ENCODE measurements at regions of chr7 and their contacts with region 1.

Region 1: DNA sequence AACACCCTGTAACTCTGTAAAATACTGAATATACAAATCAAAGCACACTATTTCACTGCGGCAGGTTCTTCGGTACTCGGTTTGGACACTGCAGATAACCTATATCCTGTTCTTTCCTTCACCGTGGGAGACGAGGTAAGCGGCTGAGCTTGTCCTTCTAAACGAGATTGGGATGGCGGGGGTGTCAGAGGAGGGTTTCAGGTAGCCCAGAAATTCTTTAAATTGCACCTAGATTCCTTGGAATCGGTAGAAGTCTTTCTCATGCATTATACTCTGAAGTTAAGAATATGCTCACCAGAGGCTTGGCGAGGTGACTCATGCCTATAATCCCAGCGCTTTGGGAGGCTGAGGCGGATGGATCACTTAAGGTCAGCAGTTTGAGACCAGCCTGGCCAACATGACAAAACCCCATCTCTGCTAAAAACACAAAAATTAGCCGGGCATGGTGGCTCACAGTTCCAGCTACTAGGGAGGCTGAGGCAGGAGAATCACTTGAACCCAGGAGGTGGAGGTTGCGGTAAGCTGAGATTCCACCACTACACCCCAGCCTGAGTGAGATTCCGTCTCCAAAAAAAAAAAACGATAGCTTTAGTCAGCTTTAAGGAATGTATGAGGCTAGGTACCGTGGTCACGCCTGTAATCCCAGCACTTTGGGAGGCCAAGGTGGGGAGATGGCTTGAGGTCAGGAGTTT is 10.1 kb upstream of the LAT2 start:
- DNase-seq: no peak
- H3K4me3 ChIP-seq: no peak overlapping the region
- H3K27me3 ChIP-seq: no peaks in the 10 kb centered on the region
- CTCF ChIP-seq: no peak

Region 2: GRCh38 chr7:74068393-74069085 is 131.2 kb before region 1 on chr7:
- CTCF ChIA-PET with region 1: interaction called, 27 read pairs
- POLR2A ChIA-PET with region 1: no interaction called
- DNase-seq: no peak
- H3K4me3 ChIP-seq: no peak overlapping the region
- H3K27me3 ChIP-seq: no peaks in the 10 kb centered on the region
- CTCF ChIP-seq: no peak

Measured in BJ (cell line).